Posterior vena cava (tissue), 2 donors: ENCODE measurements at regions of chr10 and their contacts with region 1.

Region 1: DNA sequence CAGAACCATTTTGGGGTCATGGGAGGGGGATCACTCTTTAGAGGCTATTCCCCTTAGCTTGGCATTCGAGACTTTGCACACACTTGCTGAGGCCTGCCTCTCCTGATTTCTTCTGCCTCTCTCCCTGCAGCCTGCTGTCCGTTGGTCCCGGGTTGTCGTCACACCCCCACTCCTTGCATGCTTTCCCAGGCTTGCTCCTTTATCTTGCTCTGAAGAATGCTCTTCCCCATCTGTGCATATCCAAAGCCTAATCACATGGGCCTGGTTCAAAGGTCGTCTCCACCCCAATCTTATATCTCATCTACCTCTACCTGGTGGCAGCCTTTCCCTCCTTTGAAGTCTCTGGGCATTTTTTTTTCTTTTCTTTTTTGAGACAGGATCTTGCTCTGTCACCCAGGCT is 24.3 kb upstream of the EMX2 start:
- DNase-seq: no peak

Region 2: GRCh38 chr10:117137031-117137910 is 381.0 kb before region 1 on chr10:
- intact Hi-C with region 1: no loop called
- DNase-seq: no peak

Region 3: DNA sequence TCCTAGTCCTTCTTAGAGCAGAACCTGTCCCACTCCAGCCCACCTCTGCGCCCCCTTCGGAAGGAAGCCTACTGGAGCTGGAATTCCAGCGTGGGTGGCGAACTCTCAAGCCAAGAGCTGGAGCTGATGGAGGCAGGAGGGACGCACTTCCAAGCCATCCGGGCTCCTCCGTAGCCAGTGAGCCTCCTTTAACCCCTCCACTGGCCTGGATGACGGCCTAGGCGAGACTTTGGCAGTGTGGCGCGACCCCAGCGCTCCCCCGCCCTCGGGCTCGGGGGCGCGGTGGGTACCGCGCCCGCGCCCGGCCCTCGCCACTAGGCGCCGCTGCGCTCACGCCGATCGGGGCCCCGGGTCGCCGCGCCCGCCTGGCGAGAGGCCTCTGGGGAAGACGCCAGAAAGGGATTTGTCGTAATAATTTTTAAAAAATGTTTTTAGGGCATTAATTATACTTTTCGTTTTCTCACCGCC is 19.2 kb after region 1 on chr10:
- intact Hi-C with region 1: no loop called
- DNase-seq: no peak

Region 4: GRCh38 chr10:118447478-118448270 is 929.4 kb after region 1 on chr10:
- intact Hi-C with region 1: loop called in 1 of 2 experiments (anchors 10 kb)
- DNase-seq: peak; percentile 87

Region 5: DNA sequence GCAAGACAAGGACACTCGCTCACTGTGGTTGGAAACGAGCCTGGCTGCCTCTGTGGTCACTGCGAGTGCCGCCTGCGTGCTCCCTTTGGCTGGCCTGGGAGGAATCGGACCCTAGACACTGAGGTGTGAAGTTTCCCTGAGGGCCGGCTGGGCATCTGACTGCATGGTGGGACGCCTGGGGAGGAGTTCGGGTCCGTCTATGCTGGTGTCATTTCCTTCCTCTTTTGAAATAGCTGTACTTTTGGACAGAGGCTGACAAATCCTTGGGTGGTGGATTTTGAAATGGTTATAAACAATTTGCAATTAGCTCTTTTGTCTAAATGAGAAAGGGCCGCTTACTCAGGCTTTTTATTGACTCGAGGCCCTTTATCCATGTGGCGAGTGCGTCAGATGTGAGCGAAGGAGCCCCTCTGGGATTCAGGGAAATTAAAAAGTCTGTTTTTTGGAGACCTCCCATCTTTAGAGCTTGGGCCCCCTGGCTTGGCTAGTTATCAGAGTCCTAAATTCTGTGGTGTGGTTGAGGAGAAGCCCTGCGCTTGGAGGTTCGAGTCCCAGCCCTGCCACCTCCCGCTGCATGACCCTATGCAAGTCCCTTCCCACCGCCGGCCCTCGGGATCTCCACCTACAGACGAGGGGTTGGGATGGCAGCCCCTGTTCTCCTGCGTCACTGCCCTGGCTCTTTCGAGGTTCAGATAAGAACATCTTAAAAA is 1877.2 kb after region 1 on chr10:
- intact Hi-C with region 1: loop called in 1 of 2 experiments (anchors 5 kb)
- DNase-seq: peak; percentile 91